ENCODE measurements at regions of chr2 and their contacts with region 1.

Region 1: GRCh38 chr2:76180676-76181075 is 470.0 kb upstream of the GCFC2 start:
- DNase-seq: no peak
- H3K4me3 ChIP-seq: no peak overlapping the region
- H3K27ac ChIP-seq: no peak overlapping the region
- H3K27me3 ChIP-seq: no peaks in the 10 kb centered on the region
- CTCF ChIP-seq: no peak

Region 2: GRCh38 chr2:76169276-76170008 is 11.2 kb before region 1 on chr2:
- CTCF ChIA-PET with region 1: no interaction called
- POLR2A ChIA-PET with region 1: no interaction called
- DNase-seq: no peak
- H3K4me3 ChIP-seq: no peak overlapping the region
- H3K27ac ChIP-seq: no peak overlapping the region
- H3K27me3 ChIP-seq: no peaks in the 10 kb centered on the region
- CTCF ChIP-seq: no peak

Region 3: DNA sequence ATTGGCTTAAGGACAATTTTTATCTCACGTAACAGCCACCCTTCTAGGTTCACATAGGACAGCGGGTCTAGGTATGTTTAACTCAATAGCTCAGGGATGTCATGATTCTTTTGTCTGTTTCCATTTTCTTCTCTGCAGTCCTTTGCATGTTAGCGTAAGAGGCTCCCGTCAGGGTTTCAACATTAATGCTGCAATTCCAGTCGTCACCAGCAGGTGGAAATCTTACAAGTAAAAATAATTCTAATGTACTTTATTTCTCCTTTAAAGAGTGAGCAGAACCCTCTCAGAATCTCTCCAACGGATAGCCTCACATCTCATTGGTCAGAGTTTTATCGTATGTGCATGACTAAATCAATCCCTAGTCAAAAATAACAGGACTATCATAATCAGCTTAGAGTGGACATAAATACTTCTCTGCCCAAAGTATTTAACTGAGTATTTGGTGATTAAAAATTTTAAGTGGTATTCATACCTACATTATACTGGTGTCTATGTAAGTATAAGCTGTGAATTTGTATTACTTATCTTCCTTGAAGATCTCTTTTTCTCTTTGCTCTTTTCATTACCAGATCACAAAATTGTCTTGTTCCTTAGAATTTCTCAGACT is 17.3 kb after region 1 on chr2:
- CTCF ChIA-PET with region 1: interaction called, 12 read pairs
- POLR2A ChIA-PET with region 1: no interaction called
- DNase-seq: peak; percentile 44
- H3K4me3 ChIP-seq: no peak overlapping the region
- H3K27ac ChIP-seq: no peak overlapping the region
- H3K27me3 ChIP-seq: no peaks in the 10 kb centered on the region
- CTCF ChIP-seq: peak; percentile 73

Measured in AG04450 (cell line).